ENCODE measurements at regions of chr5 and their contacts with region 1.

Region 1: DNA sequence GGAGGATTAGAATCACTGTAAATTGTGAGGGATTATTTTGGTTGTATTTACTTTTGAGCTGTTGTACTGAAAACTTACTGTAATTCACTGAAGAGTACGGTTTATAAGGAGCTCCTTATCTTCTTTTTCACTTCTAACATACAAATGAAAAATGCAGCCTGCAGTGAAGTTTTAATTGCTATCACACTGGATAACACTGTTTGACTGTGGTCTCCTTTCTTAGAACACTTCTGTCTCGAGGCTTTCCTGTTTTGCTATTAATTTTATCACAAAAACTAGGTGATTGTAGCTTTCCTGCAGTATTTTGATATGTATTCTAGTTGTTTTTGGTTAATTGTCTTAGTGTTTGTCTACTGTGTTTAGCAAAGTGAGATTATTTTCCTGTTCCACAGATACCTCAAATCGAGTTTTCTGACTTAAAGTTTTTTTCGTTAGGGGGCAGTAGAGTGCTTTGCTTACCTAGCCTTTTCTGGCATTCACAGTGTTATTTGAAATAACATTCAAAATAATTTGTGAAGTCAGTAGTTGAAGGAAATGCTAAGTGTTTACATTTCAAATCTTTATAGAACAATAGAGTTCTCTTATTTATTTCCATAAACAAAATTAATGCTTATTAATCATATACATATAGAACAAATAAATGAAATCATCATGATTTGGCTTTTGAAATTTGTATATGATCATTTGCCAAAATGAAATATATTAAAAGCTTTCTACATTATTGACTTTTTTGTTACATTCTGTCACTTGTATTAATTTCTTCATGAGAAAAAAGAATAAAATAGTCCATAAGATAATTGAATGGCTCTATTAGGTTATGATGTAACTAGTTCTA is 52.9 kb downstream of the COMMD10 start:
- DNase-seq: peak in 2 of 9 experiments; percentile 56 to 68
- ATAC-seq: peak; percentile 38
- H3K4me3 ChIP-seq: no peak overlapping the region
- H3K4me3 Mint-ChIP-seq: no peak overlapping the region
- H3K27ac ChIP-seq: no peak overlapping the region
- H3K27ac Mint-ChIP-seq: peak overlapping the region; percentile 80
- H3K4me1 ChIP-seq: no peaks in the 10 kb centered on the region
- H3K4me1 Mint-ChIP-seq: peaks cover 23% of the 10 kb centered on the region
- H3K27me3 ChIP-seq: no peaks in the 10 kb centered on the region
- H3K27me3 Mint-ChIP-seq: no peaks in the 10 kb centered on the region
- CTCF ChIP-seq: peak; percentile 90

Region 2: DNA sequence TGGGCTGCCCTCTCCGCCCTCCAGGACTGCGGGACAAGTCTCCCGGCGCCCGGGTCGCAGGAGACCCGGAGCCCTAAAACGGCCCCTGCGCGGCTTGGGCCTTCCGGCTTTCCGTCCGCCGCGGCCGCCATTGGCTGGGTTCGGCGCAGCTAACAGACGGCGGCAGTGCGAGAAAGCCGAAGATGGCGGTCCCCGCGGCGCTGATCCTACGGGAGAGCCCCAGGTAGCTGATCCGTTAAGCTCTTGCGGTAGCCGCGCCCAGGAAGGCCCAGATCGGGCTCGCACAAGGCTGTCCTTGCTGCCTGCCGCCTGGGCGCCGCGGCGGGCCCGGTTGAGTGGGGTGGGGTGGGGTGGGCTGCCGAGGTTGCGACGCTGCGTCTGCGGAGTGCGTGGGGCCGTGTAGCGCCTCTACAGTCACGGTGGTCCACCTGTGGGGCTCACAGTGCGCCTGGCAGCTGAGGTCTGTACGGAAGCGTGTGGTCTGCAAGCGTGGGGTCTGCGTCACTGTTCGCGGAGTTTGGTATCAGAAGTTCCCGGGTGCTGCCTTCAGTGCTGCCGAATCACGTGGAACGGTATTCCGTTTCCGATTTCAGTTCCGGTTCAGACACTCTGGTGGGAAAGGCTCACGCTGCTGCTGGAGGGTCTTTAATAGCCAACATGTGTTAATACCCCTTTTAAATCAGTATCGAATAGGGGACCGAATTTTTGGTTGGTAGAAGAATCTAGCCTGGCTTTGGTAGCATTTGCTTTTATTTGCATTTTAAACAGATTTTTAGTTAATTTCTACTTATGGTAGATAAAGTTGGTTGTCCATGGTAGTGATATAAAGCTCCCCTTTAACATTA is 52.7 kb before region 1 on chr5 and contains the start of gene COMMD10:
- CTCF ChIA-PET with region 1: no interaction called
- POLR2A ChIA-PET with region 1: no interaction called
- intact Hi-C with region 1: loop called in 1 of 2 experiments (anchors 2 kb)
- DNase-seq: peak; percentile 67 to 97 (median 85)
- ATAC-seq: peak; percentile 93
- H3K4me3 ChIP-seq: peak within 1 kb of the TSS; percentile 45 to 71
- H3K4me3 Mint-ChIP-seq: peak within 1 kb of the TSS; percentile 91
- H3K27ac ChIP-seq: peak within 1 kb of the TSS; percentile 87 to 96
- H3K27ac Mint-ChIP-seq: peak within 1 kb of the TSS; percentile 96
- H3K4me1 ChIP-seq: peaks cover 18% of the 10 kb centered on the region
- H3K4me1 Mint-ChIP-seq: peaks cover 62% of the 10 kb centered on the region
- H3K27me3 ChIP-seq: no peaks in the 10 kb centered on the region
- H3K27me3 Mint-ChIP-seq: no peaks in the 10 kb centered on the region
- CTCF ChIP-seq: no peak
- total RNA-seq, gene COMMD10: 18.0 to 18.8 TPM

Region 3: DNA sequence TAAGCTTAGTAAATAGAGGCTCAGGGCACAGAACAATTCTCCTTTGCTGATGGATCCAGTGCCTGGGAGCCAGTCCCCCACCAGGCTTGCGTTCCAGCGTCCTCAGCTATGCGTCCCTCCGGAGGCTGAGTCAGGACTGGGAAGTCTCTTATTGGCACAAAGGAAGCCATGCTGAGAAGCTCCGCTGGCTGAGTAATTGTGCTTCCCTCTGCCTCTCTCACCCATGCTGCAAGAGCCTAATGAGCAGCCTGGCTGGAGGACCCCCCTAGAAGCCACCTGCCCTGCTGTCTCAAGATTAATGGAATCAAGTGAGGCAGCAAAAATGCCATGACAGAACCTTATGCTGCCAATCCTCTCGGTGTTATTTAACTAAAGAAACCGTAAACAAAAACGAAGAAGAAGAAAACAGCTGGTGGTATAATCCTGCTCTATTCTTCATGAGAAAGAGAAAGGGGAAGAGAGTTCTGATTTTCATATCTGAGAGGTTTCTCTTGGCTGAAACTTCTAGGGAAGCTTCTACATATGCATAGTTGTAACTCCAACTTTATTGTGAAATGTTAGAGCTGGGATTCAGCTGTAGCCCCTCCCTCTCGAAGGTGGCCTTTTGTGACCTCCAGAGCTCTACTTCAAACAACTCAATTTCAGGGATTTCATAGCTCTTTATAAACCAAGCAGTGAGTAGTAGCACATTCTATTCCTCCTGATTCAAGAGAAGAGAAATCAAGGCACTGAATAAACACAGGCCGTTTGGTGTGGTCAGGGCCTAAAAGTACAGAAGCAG is 622.3 kb after region 1 on chr5:
- CTCF ChIA-PET with region 1: no interaction called
- POLR2A ChIA-PET with region 1: no interaction called
- intact Hi-C with region 1: loop called in 1 of 2 experiments (anchors 10 kb)
- DNase-seq: no peak
- ATAC-seq: no peak
- H3K4me3 ChIP-seq: no peak overlapping the region
- H3K4me3 Mint-ChIP-seq: no peak overlapping the region
- H3K27ac ChIP-seq: no peak overlapping the region
- H3K27ac Mint-ChIP-seq: no peak overlapping the region
- H3K4me1 ChIP-seq: no peaks in the 10 kb centered on the region
- H3K4me1 Mint-ChIP-seq: no peaks in the 10 kb centered on the region
- H3K27me3 ChIP-seq: no peaks in the 10 kb centered on the region
- H3K27me3 Mint-ChIP-seq: peaks cover 4% of the 10 kb centered on the region
- CTCF ChIP-seq: no peak

Region 4: GRCh38 chr5:116947691-116948528 is 810.1 kb after region 1 on chr5:
- CTCF ChIA-PET with region 1: interaction called, 5 read pairs
- POLR2A ChIA-PET with region 1: no interaction called
- intact Hi-C with region 1: loop called (anchors 2 kb)
- DNase-seq: peak; percentile 1 to 56 (median 37)
- ATAC-seq: no peak
- H3K4me3 ChIP-seq: no peak overlapping the region
- H3K4me3 Mint-ChIP-seq: no peak overlapping the region
- H3K27ac ChIP-seq: no peak overlapping the region
- H3K27ac Mint-ChIP-seq: no peak overlapping the region
- H3K4me1 ChIP-seq: no peaks in the 10 kb centered on the region
- H3K4me1 Mint-ChIP-seq: peaks cover 3% of the 10 kb centered on the region
- H3K27me3 ChIP-seq: no peaks in the 10 kb centered on the region
- H3K27me3 Mint-ChIP-seq: no peaks in the 10 kb centered on the region
- CTCF ChIP-seq: peak; percentile 30